ENCODE measurements at regions of chr12 and their contacts with region 1.

Region 1: GRCh38 chr12:120116792-120117651 is 469 bp upstream of the RAB35 start:
- H3K4me3 ChIP-seq: peak overlapping the region; percentile 80
- H3K27ac ChIP-seq: peak overlapping the region; percentile 86
- H3K4me1 ChIP-seq: peaks cover 9% of the 10 kb centered on the region
- CTCF ChIP-seq: no peak

Region 2: DNA sequence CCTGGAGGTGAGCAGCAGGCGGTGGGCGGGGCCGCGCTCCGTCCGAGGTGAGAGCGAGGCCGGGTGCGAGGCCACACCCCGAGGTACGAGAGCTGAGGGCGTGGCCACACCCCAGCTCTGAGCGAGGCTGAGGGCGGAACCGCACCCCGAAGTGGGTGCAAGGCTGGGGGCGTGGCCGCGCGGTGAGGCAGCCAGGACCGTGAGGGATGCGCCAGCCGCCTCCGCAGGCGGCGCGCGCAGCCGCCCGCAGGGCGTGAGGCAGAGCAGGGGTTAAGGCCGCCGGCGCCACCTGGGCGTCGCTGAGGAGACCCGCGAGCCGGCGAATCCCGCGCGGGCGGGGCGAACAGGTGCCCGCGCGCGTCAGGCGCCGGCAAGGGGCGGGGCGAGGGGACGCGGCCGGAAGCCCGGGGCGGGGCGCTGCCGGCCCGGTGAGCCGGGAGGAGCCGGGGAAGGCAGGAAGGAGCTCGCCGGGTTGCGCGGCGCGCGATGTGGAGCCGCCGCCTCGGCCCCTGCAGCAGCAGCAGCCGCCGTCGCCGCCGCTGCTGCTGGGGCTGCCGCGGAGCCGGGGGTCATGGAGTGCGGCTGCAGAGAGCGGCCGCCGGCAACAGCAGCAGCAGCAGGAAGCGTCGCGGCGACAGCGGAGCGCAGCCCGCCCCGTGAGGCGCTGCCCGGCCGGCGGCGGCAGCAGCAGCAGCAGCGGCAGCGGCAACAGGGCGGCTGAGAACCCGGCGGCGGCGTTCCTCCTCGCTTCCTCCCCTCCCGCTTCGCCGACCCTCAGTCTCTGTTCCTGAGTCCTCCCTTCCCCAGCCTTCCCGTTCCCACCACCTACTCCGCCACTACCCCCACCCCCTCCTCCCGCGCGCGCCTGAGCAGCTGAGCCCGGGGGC is 128.0 kb before region 1 on chr12 and contains the start of gene BICDL1:
- CTCF ChIA-PET with region 1: no interaction called
- POLR2A ChIA-PET with region 1: interaction called, 11 read pairs
- H3K4me3 ChIP-seq: peak within 1 kb of the TSS; percentile 62
- H3K27ac ChIP-seq: peak within 1 kb of the TSS; percentile 50; the same call in 1 of the 2 replicates
- H3K4me1 ChIP-seq: no peaks in the 10 kb centered on the region
- CTCF ChIP-seq: 0 out of 2 replicates have a peak, but pooled peaks have one; percentile 2

Region 3: DNA sequence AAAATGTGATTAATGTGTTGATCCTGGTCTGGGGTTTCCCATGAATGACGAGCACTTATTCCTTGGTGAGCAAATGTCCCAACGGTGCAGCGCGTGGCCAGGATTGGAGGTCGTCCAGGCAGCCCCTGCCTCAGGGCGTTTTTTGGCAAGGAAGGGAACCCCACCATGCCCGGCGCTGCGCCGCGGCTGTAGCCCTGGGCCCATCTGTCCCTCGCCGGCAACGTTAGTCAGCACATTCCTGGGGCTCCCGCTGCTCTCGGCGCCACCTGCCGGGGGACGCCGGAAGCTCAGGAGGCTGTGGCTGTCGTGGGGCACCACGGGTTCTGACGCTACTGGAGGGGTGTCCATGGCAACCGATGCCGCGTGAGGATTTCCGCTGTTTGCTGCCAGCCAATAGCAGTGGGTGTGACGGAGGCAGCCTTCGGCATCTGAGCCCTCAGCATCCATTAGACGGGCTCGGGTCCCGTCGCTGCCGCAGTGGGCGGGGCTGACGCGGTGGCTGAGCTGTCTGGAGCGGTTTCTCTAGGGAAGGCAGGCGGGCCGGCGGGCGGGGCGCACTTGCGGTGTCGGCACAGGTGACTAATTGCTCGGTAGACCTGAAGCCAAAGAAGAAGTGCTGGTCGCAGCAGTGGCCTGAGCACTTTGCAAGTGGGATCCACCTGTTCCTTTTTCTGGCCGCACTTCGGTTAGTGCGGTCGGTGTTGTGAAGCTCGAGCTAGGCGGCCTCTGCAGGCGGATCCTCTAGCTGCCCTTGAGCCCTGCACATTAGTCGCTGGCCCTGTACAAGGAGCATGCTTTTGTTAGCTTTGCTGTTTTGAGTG is 30.0 kb before region 1 on chr12:
- CTCF ChIA-PET with region 1: no interaction called
- POLR2A ChIA-PET with region 1: interaction called, 16 read pairs
- H3K4me3 ChIP-seq: peak overlapping the region; percentile 40
- H3K27ac ChIP-seq: no peak overlapping the region; the same call in 1 of the 2 replicates
- H3K4me1 ChIP-seq: peaks cover 2% of the 10 kb centered on the region; the same call in 1 of the 2 replicates
- CTCF ChIP-seq: peak; percentile 99

Region 4: GRCh38 chr12:120181991-120182631 is 65.1 kb after region 1 on chr12:
- CTCF ChIA-PET with region 1: no interaction called
- POLR2A ChIA-PET with region 1: no interaction called
- H3K4me3 ChIP-seq: no peak overlapping the region
- H3K27ac ChIP-seq: no peak overlapping the region
- H3K4me1 ChIP-seq: no peaks in the 10 kb centered on the region
- CTCF ChIP-seq: no peak